Heart left ventricle (tissue), 16 donors: ENCODE measurements at regions of chr9 and their contacts with region 1.

Region 1: GRCh38 chr9:29211580-29212396 is 1638.5 kb upstream of the C9orf72 start:
- DNase-seq: peak in 2 of 5 donors; percentile 34 to 68
- ATAC-seq: peak in 2 of 4 donors; percentile 69 to 90
- H3K4me3 ChIP-seq: peak overlapping the region in 7 of 12 donors; percentile 5 to 43 (median 31)
- H3K27ac ChIP-seq: no peak overlapping the region
- H3K4me1 ChIP-seq: peaks cover 0 to 26% (median 9%) of the 10 kb centered on the region in 12 donors
- H3K27me3 ChIP-seq: peaks cover 27 to 64% (median 44%) of the 10 kb centered on the region in 9 donors
- CTCF ChIP-seq: peak in 11 of 12 donors; percentile 31 to 72 (median 53)
- POLR2A ChIP-seq: no peak

Region 2: DNA sequence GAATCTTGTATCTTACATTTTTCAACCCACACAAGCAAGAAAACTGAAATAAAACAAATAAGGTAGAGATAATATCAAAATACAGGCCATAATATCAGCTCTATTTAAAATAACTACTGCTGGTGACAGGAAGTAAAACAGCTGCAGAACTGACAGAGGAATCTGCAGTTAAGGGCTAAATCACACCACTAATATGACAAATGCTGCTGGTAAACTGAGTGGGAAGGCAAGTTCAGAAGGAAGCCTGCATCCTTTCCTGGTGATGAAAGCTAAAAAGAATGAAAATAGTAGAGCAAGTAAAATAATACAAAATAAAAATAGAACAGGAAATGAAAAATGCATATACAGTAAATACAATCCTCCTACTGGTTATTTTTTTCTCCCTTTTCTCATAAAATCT is 344.8 kb before region 1 on chr9:
- intact Hi-C with region 1: no loop called
- DNase-seq: no peak
- ATAC-seq: no peak
- H3K4me3 ChIP-seq: no peak overlapping the region
- H3K27ac ChIP-seq: no peak overlapping the region
- H3K4me1 ChIP-seq: no peaks in the 10 kb centered on the region
- H3K27me3 ChIP-seq: no peaks in the 10 kb centered on the region
- CTCF ChIP-seq: no peak
- POLR2A ChIP-seq: no peak

Region 3: GRCh38 chr9:29160763-29161353 is 50.9 kb before region 1 on chr9:
- intact Hi-C with region 1: loop called in 1 of 10 experiments (anchors 5 kb)
- DNase-seq: no peak
- ATAC-seq: no peak
- H3K4me3 ChIP-seq: no peak overlapping the region
- H3K27ac ChIP-seq: no peak overlapping the region
- H3K4me1 ChIP-seq: no peaks in the 10 kb centered on the region
- H3K27me3 ChIP-seq: no peaks in the 10 kb centered on the region
- CTCF ChIP-seq: no peak
- POLR2A ChIP-seq: no peak